Left colon (tissue), 2 donors: ENCODE measurements at regions of chr5 and their contacts with region 1.

Region 1: DNA sequence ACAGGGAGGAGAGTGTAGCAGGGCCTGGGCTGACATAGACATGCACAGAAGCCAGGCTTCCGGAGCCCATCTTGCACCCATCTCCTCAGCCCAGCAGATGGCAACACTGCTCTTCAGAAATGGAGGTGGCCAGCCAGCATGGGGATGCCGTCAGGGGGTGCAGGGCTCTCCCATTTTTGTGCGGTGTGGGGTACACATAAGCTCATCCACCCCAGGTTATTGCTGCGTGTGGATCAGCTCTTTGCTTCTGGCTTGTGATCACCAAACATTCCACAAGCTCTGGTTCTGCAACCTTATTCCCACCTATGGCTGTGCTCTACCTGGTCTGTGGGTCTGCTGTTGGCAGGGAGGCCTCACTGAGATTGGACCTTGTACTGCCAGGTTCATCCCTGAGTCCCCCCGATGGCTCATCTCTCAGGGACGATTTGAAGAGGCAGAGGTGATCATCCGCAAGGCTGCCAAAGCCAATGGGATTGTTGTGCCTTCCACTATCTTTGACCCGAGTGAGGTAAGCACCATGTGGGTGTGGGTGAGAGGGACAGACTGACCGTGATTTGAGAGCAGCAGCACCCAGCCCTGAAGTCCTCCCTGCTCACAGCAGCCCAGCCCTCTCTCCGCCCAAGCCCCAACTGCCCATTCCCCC is 17.3 kb downstream of the SLC22A5 start:
- DNase-seq: peak; percentile 80 to 81
- ATAC-seq: peak; percentile 78

Region 2: DNA sequence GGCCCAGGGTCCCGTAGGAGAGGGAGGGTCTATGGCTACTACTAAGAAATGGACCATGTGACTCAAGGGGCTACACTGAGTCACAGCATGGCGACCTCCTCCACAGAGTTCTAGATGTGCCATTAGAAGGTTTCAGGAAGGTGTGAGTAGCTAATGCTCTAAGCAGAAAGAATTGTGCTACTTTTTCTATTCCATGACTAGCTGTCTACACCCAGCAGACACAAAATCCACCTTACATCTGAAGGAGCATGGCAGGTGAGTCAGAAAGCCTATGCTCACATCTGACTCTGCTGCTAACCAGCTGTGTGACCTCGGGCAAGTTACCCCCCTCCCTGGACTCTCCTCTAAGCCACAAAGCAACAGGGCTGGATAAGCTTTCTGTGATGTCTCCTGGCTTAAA is 426.9 kb before region 1 on chr5:
- intact Hi-C with region 1: no loop called
- DNase-seq: no peak
- ATAC-seq: no peak

Region 3: DNA sequence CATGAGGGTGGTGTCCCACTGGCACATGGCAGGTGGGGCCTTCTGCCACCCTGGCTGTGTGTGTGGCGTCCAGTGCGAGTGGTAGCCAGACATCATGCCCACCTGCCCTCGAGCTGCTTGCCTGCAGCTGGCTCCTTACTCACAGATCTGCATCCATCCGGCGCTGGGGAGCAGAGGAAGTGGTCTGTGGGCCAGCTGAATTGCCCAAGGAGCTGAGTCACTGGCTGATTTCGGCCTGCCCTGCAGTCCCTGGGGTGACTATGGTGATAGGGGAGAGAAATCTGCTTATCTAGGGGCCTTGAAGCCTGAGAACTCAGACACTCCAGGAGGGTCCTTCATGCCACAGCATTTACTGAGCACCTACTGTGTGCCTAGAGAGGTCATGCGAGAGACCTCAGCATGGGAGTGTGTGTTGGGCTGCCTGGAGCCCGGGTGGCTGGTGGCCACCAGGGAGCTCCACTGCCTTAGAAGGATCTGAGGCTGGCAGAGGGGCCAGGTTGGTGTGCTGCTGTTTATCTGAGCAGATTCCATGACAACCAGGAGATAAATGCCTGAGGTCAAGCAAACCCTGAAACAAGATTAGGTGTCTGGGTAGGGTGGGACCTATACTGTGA is 39.9 kb after region 1 on chr5:
- intact Hi-C with region 1: no loop called
- DNase-seq: peak; percentile 71 to 83
- ATAC-seq: peak; percentile 22

Region 4: DNA sequence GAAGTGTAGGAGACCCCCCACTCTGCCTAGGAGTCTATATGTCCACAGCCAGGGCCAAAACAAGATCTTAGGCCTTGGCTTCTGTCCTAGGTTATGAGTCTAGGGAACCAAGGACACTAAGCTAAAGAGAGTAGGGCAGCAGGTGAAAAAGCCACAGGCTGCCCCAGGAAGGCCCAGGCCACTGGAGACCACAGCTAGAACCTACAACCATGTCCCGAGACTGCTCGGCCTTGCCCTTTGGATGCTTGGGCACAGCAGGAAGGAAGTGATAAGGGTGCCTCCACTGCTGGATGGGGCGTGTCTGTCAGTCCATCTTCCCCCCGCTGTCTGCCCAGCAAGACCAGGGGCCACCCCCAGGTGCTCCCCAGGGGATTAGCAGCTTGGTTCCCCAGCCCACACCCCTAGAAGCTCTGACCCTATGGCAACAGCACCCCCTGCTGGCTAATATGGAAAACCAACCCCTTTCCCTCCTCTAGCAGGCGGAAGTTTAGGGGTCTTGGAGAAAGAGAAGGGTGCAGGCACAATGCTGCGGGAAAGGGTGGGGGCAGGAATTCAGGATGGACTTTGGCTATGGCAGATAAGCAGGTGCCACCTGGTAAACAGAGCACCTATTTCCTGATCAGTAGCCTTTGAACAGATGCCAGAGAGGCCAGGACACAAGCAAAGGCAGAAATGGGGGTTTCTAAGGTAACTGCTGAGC is 114.3 kb after region 1 on chr5:
- intact Hi-C with region 1: loop called in 1 of 2 experiments (anchors 2 kb)
- DNase-seq: peak; percentile 78 to 91
- ATAC-seq: peak; percentile 60

Region 5: DNA sequence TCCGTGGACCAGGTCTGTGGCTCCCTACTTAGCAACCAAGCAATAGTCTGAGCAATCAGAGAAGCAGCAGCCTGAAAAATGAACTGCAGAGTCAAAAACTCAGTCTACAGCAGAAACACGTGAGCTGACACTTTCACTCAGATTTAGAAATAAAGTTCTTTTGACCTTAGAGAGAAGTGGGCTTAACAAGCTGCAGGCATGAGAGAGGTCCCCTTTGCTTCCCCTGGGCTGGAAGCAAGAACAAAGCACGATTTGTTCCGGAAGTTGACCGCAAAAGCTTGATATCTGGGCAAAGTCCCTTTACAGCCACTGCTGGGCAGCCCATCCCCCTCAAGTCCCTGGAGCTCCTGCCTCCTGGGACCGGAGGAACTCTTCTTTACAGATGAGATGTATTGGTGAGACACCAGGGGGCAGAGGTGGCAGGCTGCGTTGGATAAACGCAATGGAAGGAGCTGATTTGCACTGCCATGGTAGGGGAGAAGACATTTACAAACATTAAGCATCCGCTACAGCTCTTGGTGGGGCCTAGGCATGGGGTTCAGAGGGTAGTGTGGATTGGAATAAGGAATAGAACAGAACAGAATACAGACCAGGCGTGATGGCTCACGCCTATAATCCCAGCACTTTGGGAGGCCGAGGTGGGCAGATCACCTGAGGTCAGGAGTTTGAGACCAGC is 420.5 kb after region 1 on chr5:
- intact Hi-C with region 1: loop called in 1 of 2 experiments (anchors 10 kb)
- DNase-seq: peak; percentile 88 to 94
- ATAC-seq: peak; percentile 97

Region 6: DNA sequence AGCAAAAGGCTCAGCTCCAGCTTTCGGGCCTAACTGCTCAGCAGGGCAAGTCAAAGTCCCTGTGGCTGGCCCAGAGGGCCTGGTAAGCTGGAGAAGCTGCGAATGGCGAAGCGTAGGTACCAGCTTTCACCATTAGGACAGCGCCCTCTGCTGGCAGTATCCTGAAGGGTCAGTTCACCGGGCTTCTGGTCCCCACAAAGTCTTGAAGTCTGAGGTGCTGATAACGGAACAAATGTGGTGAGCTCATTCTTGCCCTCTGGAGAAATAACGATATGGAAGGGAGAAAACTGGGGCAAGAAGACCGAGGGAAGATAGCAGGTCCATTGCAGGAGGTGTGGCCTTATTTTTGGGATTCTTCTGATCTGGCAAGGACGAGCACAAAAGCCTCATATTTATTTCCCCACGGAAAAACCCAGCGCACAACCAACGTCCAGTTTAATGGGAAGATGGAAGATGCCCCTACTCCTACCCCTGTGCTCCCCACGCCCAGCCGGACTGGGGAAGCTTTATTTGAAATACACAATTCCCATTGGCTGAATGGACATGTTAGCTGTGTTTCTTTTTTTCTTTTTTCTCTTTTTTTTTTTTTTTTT is 433.5 kb after region 1 on chr5:
- intact Hi-C with region 1: loop called in 1 of 2 experiments (anchors 10 kb)
- DNase-seq: peak; percentile 89 to 97
- ATAC-seq: peak; percentile 84